AG04449 (cell line): ENCODE measurements at regions of chr1 and their contacts with region 1.

Region 1: GRCh38 chr1:11645670-11646265 is 8.5 kb downstream of the FBXO2 start:
- DNase-seq: no peak
- H3K4me3 ChIP-seq: no peak overlapping the region
- CTCF ChIP-seq: peak; percentile 80

Region 2: GRCh38 chr1:11099310-11100149 is 546.2 kb before region 1 on chr1 and contains the start of gene EXOSC10:
- CTCF ChIA-PET with region 1: interaction called, 12 read pairs
- POLR2A ChIA-PET with region 1: no interaction called
- DNase-seq: peak; percentile 9
- H3K4me3 ChIP-seq: peak within 1 kb of the TSS; percentile 98
- CTCF ChIP-seq: no peak

Region 3: DNA sequence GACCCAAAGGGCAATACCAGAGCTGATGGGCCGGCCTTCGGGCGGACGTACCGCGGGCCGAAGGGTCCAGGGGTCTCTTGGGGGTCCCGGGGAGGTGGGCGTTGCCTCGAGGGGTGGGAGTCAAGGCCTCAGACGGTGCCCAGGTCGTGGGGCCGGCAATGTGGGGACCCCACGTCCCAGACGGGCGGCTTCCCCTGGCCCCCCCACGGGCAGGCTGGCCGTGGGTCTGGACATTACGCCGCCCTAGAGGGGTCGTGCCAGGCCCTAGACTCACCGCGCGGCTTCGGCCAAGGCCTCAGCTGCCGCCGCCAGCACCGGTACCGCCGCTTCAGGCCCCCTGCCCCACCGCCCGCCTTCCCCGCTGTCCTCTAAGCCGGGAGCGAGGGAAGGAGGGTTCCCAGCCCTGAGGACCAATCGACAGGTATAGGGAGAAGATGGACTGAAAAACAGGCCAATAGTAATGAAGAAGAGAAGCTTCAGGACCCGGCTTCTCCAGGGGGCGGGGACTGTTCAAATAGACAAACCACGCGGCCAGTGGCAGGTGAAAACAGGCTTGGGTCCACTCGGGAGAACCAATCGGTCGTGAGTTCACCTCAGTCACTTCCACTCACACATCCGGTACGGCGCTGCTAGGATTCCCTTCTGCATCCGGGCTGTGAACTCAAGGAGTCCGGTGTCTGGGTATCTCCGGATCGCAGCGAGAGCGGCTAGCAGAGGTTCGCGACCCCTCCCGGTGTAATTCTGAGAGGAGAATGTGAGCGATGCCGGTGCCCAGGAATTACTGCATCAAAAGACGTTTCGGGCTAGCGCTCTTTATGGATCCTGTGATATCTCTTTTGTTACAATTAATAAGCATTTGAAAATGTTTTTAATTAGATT is 383.4 kb before region 1 on chr1 and contains the start of gene MTOR:
- CTCF ChIA-PET with region 1: interaction called, 18 read pairs
- POLR2A ChIA-PET with region 1: no interaction called
- DNase-seq: peak; percentile 98
- H3K4me3 ChIP-seq: peak within 1 kb of the TSS; percentile 89
- CTCF ChIP-seq: peak; percentile 29

Region 4: DNA sequence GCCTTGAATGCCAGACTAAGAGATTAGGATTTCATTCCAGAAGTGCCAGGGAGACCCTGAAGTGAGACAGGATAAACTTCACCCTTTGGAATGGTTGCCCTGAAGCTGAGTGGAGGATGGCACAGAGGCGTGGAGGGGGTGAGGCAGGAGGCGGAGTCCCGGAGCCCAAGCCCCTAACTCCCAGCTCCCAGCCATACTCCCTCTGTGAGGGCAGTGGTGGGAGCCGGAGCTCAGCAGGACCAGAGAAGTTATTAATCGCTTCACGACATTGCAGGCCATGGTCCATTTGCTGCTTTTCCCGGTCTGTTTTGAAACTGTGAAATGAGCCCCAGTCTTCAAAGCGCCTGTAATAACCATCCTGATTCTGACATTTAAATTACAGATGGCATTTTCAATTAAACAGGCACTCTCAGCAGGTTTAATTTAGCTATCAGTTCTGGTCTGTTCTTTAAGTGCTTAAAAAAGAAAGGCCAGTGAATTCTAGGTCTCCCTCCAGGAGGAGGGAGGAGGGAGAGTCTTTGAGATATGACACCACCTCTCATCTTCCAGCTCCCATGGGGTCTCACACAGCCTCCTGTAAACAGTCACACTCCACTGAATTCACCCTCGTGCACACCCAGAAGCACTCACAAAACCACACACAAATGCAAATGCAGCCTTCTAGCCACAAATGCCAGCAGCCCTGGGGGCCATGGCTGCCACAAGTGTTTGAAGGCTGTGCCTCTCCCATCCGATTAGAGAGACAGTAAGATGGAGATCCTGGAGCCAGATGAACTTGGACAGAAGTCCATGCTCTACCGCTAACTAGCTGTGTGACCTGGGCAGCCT is 11.2 kb before region 1 on chr1:
- CTCF ChIA-PET with region 1: interaction called, 43 read pairs
- POLR2A ChIA-PET with region 1: no interaction called
- DNase-seq: no peak
- H3K4me3 ChIP-seq: no peak overlapping the region
- CTCF ChIP-seq: no peak

Region 5: DNA sequence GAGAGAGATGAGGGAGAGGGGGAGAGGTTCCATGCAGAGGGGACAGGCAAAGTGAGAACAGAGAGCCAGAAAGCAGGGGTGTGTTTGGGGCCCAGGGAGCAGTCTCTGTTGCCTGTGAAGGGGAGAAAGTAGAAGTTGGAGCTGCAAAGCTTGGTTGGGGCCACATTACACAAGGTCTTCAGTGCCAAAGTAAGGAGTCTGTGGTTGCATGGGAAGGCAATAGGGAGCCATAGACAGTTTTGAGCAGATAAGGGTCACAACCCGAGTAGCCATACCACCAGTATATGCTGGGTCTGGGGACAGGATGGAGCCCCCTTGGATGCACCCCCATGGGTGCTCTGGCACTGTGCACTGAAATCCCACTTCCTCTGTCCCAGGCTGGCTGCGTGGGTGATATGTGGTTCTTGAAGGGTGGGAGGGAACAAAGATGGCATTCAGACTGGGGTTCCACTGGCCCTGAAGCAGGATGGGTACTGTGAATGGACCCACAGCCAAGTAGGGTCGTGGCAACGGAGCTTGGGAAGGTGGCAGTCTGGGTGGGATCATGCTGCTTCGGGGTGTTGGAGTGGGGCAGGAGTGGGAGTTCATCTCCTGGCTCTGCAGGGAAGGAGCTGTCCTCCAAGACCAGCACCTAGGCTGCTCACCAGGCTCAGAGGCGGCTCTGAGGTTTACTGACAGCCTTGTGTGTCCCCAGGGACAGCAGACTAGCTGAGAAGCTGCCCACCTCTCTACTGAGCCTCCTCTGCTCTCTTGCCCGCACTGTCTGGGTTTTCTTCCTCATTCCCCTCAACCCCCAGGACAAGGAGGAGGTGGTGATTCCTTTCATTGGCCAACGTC is 57.8 kb after region 1 on chr1:
- CTCF ChIA-PET with region 1: no interaction called
- POLR2A ChIA-PET with region 1: no interaction called
- DNase-seq: no peak
- H3K4me3 ChIP-seq: no peak overlapping the region
- CTCF ChIP-seq: no peak

Region 6: GRCh38 chr1:11719313-11720032 is 73.7 kb after region 1 on chr1:
- CTCF ChIA-PET with region 1: interaction called, 88 read pairs
- POLR2A ChIA-PET with region 1: no interaction called
- DNase-seq: no peak
- H3K4me3 ChIP-seq: peak overlapping the region; percentile 42
- CTCF ChIP-seq: peak; percentile 90

Region 7: GRCh38 chr1:12113433-12114339 is 467.9 kb after region 1 on chr1:
- CTCF ChIA-PET with region 1: no interaction called
- POLR2A ChIA-PET with region 1: no interaction called
- DNase-seq: no peak
- H3K4me3 ChIP-seq: no peak overlapping the region
- CTCF ChIP-seq: no peak